CD4-positive, alpha-beta memory T cell (primary cell): ENCODE measurements at regions of chr21 and their contacts with region 1.

Region 1: DNA sequence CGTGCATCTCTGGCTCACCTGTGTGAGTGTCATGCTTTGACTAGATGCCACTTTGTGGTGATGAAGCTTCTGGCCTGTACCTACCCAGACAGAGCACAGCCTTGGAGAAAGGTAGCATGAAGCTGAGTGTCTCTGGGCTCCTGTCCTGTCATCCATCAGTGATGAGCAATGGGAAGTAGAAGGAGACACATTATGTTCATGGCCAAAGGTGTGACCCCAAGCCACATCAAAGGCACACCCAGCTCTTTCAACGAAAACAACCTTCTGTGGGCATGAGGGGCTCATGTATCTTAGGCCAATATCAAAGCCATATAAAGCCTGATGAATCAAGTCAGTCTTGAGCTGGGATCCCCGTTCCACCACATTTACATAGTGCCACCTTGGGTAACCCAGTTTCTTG is 1.0 kb upstream of the CLIC6 start:
- DNase-seq: no peak
- H3K4me3 ChIP-seq: no peak overlapping the region
- H3K4me3 Mint-ChIP-seq: peak overlapping the region in 2 of 8 donors; percentile 23 to 74
- H3K27ac ChIP-seq: no peak overlapping the region
- H3K27ac Mint-ChIP-seq: no peak overlapping the region
- H3K4me1 ChIP-seq: peaks cover 10% of the 10 kb centered on the region
- H3K4me1 Mint-ChIP-seq: peaks cover 4 to 20% (median 11%) of the 10 kb centered on the region in 4 donors
- H3K27me3 ChIP-seq: peaks cover 6% of the 10 kb centered on the region
- H3K27me3 Mint-ChIP-seq: peaks cover 32 to 33% of the 10 kb centered on the region in 2 donors

Region 2: GRCh38 chr21:34688145-34688544 is 20.4 kb after region 1 on chr21:
- CTCF ChIA-PET with region 1: interaction called, 13 read pairs
- POLR2A ChIA-PET with region 1: no interaction called
- intact Hi-C with region 1: no loop called
- DNase-seq: peak in 1 of 5 donors; percentile 47
- H3K4me3 ChIP-seq: no peak overlapping the region
- H3K4me3 Mint-ChIP-seq: no peak overlapping the region
- H3K27ac ChIP-seq: no peak overlapping the region
- H3K27ac Mint-ChIP-seq: no peak overlapping the region
- H3K4me1 ChIP-seq: no peaks in the 10 kb centered on the region
- H3K4me1 Mint-ChIP-seq: no peaks in the 10 kb centered on the region
- H3K27me3 ChIP-seq: peaks cover 3% of the 10 kb centered on the region
- H3K27me3 Mint-ChIP-seq: peaks cover 14 to 34% of the 10 kb centered on the region in 2 donors

Region 3: GRCh38 chr21:34771512-34772028 is 103.8 kb after region 1 on chr21:
- CTCF ChIA-PET with region 1: no interaction called
- POLR2A ChIA-PET with region 1: no interaction called
- intact Hi-C with region 1: no loop called
- DNase-seq: no peak
- H3K4me3 ChIP-seq: no peak overlapping the region
- H3K4me3 Mint-ChIP-seq: no peak overlapping the region
- H3K27ac ChIP-seq: no peak overlapping the region
- H3K27ac Mint-ChIP-seq: no peak overlapping the region
- H3K4me1 ChIP-seq: no peaks in the 10 kb centered on the region
- H3K4me1 Mint-ChIP-seq: no peaks in the 10 kb centered on the region
- H3K27me3 ChIP-seq: no peaks in the 10 kb centered on the region
- H3K27me3 Mint-ChIP-seq: peaks cover 5 to 12% of the 10 kb centered on the region in 2 donors